AG04450 (cell line): ENCODE measurements at regions of chr21 and their contacts with region 1.

Region 1: DNA sequence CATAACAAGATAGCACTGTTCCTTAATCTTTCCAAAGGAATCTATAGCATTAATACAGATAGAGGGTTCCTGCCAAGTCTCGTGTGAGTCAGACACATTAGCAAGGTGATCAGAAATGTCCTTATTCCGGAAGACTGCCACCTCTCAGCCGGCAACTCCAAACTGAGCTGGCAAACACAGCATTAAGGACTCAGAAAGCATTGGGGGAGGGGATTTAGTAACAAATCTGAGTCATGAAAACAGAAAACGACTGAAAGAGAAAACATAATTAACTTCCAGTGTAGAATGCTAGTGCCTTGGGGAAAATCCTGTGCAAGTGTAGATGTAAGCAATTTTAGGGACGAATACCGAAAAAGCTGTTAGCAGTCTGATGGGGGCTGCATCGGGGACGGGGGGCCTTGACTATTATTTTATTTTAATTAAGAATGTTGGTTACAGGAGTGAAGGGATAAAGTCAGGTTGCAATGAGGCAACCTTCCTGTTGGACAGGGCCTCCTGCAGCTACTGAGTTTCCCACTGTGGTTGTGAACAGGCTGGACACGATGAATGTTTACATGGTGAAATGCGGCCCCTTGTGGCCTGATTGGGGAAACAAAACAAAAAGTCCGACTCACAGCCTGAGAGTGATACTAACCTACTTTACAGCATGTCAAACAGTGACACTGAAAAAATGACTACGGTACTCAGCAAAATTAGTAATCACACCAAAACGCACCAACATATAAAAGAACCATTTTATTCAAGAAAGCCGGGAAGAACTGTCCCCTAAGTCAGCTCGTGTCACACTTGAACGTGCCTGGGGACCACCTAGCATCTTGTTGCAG is 20.7 kb downstream of the MIS18A start:
- DNase-seq: peak; percentile 54
- H3K4me3 ChIP-seq: no peak overlapping the region
- H3K27ac ChIP-seq: no peak overlapping the region
- H3K27me3 ChIP-seq: no peaks in the 10 kb centered on the region
- CTCF ChIP-seq: peak; percentile 86

Region 2: DNA sequence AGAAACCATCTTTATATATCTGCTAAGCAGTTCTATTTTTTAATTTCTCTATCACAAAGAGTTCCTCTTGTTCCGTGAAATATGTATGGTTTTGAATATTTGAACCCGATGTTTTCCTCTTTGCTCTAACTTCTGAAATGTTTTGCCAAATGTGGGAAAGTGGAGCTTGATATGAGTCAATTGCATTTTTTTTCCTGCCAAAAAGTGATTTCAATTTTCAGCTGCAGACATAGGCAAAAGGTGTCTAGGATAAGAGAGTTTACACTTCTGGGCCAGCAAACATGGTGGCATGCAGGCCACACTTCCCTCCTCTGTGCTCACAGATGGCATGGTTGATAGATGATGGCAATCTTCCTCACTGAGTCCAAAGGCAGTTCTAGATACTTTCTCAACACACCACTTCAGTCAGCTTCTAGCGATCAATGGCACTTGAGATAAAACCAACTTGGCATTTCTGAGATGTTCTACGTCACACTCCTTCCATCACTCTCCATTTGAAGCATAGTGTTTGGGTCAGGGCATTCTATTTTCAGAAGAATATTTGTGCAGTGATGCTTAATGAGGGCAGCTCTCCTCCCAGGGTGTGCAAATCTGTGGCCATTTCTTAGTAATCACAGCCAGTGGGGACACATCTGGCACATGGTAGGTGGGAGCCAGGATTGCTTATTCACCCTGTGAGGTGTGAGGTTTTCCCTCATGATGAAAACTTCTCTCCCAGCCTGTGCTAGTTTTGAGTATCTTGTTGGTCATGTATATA is 471.8 kb before region 1 on chr21:
- CTCF ChIA-PET with region 1: interaction called, 73 read pairs
- POLR2A ChIA-PET with region 1: no interaction called
- DNase-seq: no peak
- H3K4me3 ChIP-seq: no peak overlapping the region
- H3K27ac ChIP-seq: no peak overlapping the region
- H3K27me3 ChIP-seq: no peaks in the 10 kb centered on the region
- CTCF ChIP-seq: no peak

Region 3: GRCh38 chr21:31866077-31866511 is 392.1 kb before region 1 on chr21:
- CTCF ChIA-PET with region 1: interaction called, 98 read pairs
- POLR2A ChIA-PET with region 1: no interaction called
- DNase-seq: peak; percentile 23
- H3K4me3 ChIP-seq: no peak overlapping the region
- H3K27ac ChIP-seq: no peak overlapping the region
- H3K27me3 ChIP-seq: peaks cover 9% of the 10 kb centered on the region
- CTCF ChIP-seq: peak; percentile 83

Region 4: GRCh38 chr21:31873696-31874599 is 384.2 kb before region 1 on chr21:
- CTCF ChIA-PET with region 1: interaction called, 55 read pairs
- POLR2A ChIA-PET with region 1: no interaction called
- DNase-seq: no peak
- H3K4me3 ChIP-seq: peak overlapping the region; percentile 55
- H3K27ac ChIP-seq: no peak overlapping the region
- H3K27me3 ChIP-seq: peaks cover 36% of the 10 kb centered on the region
- CTCF ChIP-seq: peak; percentile 39

Region 5: DNA sequence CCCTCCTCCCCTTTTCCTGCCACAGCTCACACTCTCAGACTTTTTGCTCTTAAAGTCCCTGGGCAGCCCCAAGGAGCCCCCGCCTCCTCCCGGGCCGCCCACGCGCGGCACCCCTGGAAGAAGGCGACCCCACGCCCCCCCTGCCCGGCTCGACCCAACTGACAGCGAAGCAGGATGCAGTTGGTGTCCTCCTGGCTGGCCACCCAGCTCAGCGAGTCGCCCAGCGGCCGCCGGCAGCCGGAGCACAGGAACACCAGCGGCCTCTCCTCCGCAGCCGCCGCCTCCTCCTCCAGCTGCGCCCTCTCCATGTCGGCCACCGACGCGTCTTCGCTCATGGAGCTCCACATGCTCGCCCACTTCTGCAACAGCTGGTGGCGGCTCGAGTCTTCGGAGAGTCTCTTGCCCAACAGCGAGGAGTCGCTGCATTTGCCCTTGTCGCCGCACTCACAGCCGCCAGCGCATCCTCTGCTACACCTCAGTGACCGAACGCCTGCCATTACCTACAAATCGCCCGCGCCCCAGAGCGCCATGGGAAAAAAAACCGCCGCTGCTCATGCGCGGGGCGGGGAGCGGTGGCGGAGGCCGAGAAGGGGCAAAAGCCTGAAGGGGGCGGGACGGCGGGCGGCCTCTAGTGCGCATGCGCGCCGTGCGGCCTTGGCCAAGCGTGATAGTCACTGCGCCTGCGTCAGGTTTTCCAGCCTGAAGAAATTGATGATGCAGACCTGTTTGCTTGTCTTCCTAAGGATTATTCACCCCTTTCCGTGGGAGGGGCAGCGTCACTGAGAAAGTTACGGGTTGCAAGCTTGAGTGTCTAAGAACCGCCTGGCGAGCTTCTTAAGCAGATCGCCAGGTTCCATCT is 20.6 kb after region 1 on chr21 and contains the start of gene MIS18A:
- CTCF ChIA-PET with region 1: interaction called, 10 read pairs
- POLR2A ChIA-PET with region 1: no interaction called
- DNase-seq: peak; percentile 91
- H3K4me3 ChIP-seq: peak within 1 kb of the TSS; percentile 94
- H3K27ac ChIP-seq: peak within 1 kb of the TSS; percentile 77
- H3K27me3 ChIP-seq: no peaks in the 10 kb centered on the region
- CTCF ChIP-seq: no peak
- polyA plus RNA-seq, gene MIS18A: 4.7 and 6.3 TPM in 2 replicates